ENCODE measurements at regions of chr6 and their contacts with region 1.

Region 1: GRCh38 chr6:154593122-154593521 is 82.6 kb upstream of the CNKSR3 start:
- DNase-seq: no peak
- H3K4me3 ChIP-seq: no peak overlapping the region
- CTCF ChIP-seq: no peak

Region 2: DNA sequence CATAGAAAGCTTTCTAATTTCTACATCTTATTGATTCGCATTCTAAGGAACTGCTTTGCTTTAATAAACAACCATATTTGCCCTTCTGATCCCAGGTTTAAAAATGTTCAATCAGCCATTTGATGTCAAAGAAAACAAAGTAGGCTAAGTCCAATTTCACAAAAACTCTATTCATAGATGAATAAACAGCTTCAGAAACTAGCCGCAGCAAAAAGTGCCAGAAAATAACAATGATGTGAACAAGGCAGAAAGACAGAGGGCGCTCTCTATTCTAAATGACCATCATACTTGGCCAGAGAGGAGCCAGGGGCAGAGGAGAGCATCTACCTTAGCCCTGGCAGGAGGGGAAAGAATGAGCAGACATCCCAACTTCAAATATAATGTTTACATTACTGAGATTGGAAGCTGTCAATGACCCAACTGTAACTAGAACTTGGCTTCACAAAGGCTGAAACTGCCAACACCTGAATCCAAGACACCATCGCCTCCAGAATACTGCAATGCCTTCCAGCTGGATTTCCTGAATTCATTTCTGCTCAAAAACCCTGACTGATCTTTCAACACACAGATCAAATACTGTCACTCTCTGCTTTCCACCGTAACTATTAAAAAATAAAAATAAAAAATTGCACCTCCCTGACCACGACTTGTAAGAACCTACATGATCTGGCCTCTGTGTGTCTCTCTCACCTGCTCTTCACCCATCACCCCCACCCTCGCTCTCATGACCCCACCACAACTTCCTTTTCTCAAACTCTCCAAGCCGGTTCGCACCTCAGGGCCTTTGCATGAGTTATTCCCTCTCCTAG is 92.1 kb before region 1 on chr6:
- in situ Hi-C with region 1: no loop called
- DNase-seq: no peak
- H3K4me3 ChIP-seq: no peak overlapping the region
- CTCF ChIP-seq: peak; percentile 50

Region 3: DNA sequence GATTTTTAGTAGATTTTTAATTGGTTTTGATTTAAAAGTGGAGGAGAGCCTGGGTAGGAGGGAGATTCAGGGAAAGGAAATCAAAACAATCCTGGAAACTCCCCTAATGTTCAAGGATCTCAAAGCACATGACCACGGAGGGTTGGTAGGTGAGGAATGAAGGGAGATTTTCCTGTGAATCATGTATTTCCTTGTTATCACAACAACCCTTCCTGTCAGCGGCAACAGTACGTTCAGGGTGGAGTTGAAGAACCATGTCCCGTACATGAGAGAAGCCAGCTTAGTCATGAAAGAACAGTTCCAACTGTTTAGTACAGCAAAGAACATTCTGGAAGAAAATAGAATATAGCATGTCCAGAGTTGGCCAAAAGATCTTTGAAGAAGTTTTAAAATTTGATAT is 60.7 kb after region 1 on chr6:
- in situ Hi-C with region 1: loop called (anchors 5 kb)
- DNase-seq: no peak
- H3K4me3 ChIP-seq: no peak overlapping the region
- CTCF ChIP-seq: no peak